Dorsolateral prefrontal cortex (tissue), 120 donors: ENCODE measurements at regions of chr16 and their contacts with region 1.

Region 1: DNA sequence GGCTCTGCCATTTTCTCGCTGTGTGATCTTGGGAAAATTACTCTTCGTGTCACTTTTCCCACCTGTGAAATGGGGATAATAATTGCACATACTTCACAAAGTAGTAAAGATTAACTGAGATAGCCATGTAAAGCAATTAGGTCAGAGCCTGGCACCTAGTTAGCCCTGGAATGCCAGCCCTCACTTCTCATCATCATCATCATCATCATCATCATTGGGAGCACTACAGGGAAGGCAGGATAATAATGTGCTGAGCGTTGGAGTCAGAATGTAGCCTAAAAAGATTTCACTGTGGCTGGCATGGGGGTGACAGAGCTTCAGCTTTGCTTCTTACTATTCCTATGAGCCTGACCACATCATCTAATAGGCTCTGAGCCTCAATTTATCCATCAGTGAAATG is 362.6 kb downstream of the TOX3 start:
- DNase-seq: no peak
- H3K4me3 ChIP-seq: no peak overlapping the region
- H3K27ac ChIP-seq: no peak overlapping the region
- H3K27me3 ChIP-seq: peaks cover 0 to 9% (median 0%) of the 10 kb centered on the region in 45 donors
- CTCF ChIP-seq: no peak

Region 2: GRCh38 chr16:51666821-51667220 is 517.5 kb before region 1 on chr16:
- intact Hi-C with region 1: no loop called
- DNase-seq: no peak
- H3K4me3 ChIP-seq: no peak overlapping the region
- H3K27ac ChIP-seq: no peak overlapping the region
- H3K27me3 ChIP-seq: peaks cover 0 to 5% (median 0%) of the 10 kb centered on the region in 45 donors
- CTCF ChIP-seq: no peak

Region 3: GRCh38 chr16:52089476-52089875 is 94.9 kb before region 1 on chr16:
- intact Hi-C with region 1: loop called in 1 of 2 experiments (anchors 10 kb)
- DNase-seq: no peak
- H3K4me3 ChIP-seq: no peak overlapping the region
- H3K27ac ChIP-seq: no peak overlapping the region
- H3K27me3 ChIP-seq: peaks cover 0 to 2% (median 0%) of the 10 kb centered on the region in 45 donors
- CTCF ChIP-seq: no peak